Activated CD8-positive, alpha-beta T cell treated with anti-CD3 and anti-CD28 coated beads, Interleukin-2, amount 10 ng/mL, durations not matched to agents 7 days and 5 days (primary cell): ENCODE measurements at regions of chr7 and their contacts with region 1.

Region 1: DNA sequence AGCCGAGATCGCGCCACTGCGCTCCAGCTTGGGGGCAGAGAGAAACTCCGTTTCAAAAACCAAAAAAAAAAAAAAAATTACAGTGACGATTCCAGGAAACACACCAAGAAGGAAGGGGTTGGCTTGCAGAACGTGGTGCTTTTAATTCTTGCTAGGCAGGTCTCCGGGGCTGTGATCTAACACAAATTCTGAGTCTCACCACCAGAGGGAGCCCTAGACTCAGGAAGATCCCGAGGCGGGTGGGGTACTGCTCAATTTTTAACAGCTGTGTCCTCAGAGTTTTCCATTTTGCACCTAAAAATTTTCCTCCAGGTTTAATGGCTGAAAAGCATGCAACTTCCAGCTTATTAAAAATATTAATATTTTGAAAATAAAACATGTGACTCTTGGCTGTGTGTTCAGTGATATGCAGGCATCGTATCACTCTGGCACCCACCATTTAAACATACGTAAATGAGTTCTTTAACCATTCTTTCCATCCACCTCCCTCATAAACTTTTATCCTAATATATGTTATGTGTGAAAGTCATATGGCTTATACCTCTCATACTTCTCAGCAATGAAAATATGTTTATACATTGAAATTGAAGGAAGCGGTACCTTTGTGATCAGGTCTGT is 26.5 kb upstream of the NUB1 start:
- DNase-seq: peak; percentile 91
- ATAC-seq: peak; percentile 94
- H3K4me3 Mint-ChIP-seq: peak overlapping the region; percentile 40
- H3K27ac Mint-ChIP-seq: peak overlapping the region; percentile 79
- H3K4me1 Mint-ChIP-seq: peaks cover 16% of the 10 kb centered on the region
- H3K27me3 Mint-ChIP-seq: no peaks in the 10 kb centered on the region

Region 2: DNA sequence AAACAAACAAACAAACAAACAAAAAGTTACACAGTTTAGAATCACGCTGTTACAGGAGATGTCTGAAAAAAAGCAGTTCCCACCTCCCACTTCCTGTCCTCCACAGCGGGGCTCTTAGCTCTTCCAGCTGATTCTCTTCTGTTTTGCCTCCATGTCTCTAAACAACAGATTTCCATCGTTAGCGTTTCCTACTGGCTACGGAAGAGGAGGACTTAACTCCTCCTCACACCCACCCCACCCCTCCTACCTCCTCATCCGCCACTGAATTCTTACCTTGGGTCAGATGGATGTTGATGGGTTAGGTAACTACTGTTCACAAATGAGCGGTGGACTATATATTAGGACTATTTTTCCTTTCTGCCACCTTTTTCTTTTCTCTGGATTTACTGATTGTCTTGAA is 10.3 kb before region 1 on chr7:
- CTCF ChIA-PET with region 1: interaction called, 21 read pairs
- POLR2A ChIA-PET with region 1: no interaction called
- DNase-seq: no peak
- ATAC-seq: no peak
- H3K4me3 Mint-ChIP-seq: peak overlapping the region; percentile 31
- H3K27ac Mint-ChIP-seq: no peak overlapping the region
- H3K4me1 Mint-ChIP-seq: peaks cover 23% of the 10 kb centered on the region
- H3K27me3 Mint-ChIP-seq: peaks cover 30% of the 10 kb centered on the region

Region 3: DNA sequence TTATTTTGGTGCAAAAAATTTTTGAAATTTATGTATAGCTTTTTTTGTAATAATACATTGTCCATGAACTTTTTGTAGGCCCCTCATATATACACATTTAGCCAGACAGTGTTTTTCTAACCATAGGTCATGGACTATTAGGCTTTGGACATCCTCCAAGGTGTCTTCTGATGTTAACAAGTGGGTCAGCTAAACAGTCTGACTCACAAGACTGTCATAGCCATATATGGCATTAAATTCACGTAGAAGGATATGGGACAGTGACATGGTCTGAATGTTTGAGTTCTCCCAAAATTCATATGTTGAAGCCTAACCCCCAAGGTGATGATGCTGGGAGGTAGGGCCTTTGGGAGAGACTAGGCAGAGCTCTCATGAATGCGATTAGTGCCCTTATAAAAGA is 12.5 kb after region 1 on chr7:
- CTCF ChIA-PET with region 1: interaction called, 73 read pairs
- POLR2A ChIA-PET with region 1: no interaction called
- DNase-seq: no peak
- ATAC-seq: no peak
- H3K4me3 Mint-ChIP-seq: no peak overlapping the region
- H3K27ac Mint-ChIP-seq: no peak overlapping the region
- H3K4me1 Mint-ChIP-seq: no peaks in the 10 kb centered on the region
- H3K27me3 Mint-ChIP-seq: peaks cover 9% of the 10 kb centered on the region

Region 4: GRCh38 chr7:151336027-151336708 is 21.0 kb after region 1 on chr7:
- CTCF ChIA-PET with region 1: interaction called, 108 read pairs
- POLR2A ChIA-PET with region 1: interaction called, 3 read pairs
- DNase-seq: no peak
- ATAC-seq: no peak
- H3K4me3 Mint-ChIP-seq: no peak overlapping the region
- H3K27ac Mint-ChIP-seq: no peak overlapping the region
- H3K4me1 Mint-ChIP-seq: peaks cover 15% of the 10 kb centered on the region
- H3K27me3 Mint-ChIP-seq: no peaks in the 10 kb centered on the region

Region 5: GRCh38 chr7:151341357-151342101 is 26.4 kb after region 1 on chr7 and contains the start of gene NUB1:
- CTCF ChIA-PET with region 1: interaction called, 108 read pairs
- POLR2A ChIA-PET with region 1: interaction called, 3 read pairs
- DNase-seq: peak; percentile 92
- ATAC-seq: peak; percentile 80
- H3K4me3 Mint-ChIP-seq: peak within 1 kb of the TSS; percentile 83
- H3K27ac Mint-ChIP-seq: peak within 1 kb of the TSS; percentile 84
- H3K4me1 Mint-ChIP-seq: peaks cover 31% of the 10 kb centered on the region
- H3K27me3 Mint-ChIP-seq: no peaks in the 10 kb centered on the region
- total RNA-seq, gene NUB1: 59.0 to 59.2 TPM

Region 6: GRCh38 chr7:151351027-151351426 is 35.9 kb after region 1 on chr7:
- CTCF ChIA-PET with region 1: interaction called, 209 read pairs
- POLR2A ChIA-PET with region 1: interaction called, 32 read pairs
- DNase-seq: peak; percentile 63
- ATAC-seq: no peak
- H3K4me3 Mint-ChIP-seq: peak overlapping the region; percentile 51
- H3K27ac Mint-ChIP-seq: peak overlapping the region; percentile 90
- H3K4me1 Mint-ChIP-seq: peaks cover 47% of the 10 kb centered on the region
- H3K27me3 Mint-ChIP-seq: no peaks in the 10 kb centered on the region